ENCODE measurements at regions of chr5 and their contacts with region 1.

Region 1: GRCh38 chr5:55936100-55936693 is 58.6 kb downstream of the IL6ST start:
- DNase-seq: peak; percentile 82
- H3K4me3 ChIP-seq: no peak overlapping the region
- H3K27ac ChIP-seq: no peak overlapping the region
- H3K27me3 ChIP-seq: no peaks in the 10 kb centered on the region
- CTCF ChIP-seq: peak; percentile 96

Region 2: GRCh38 chr5:54905943-54906537 is 1030.2 kb before region 1 on chr5:
- CTCF ChIA-PET with region 1: no interaction called
- POLR2A ChIA-PET with region 1: no interaction called
- DNase-seq: peak; percentile 59
- H3K4me3 ChIP-seq: no peak overlapping the region
- H3K27ac ChIP-seq: no peak overlapping the region
- H3K27me3 ChIP-seq: no peaks in the 10 kb centered on the region
- CTCF ChIP-seq: peak; percentile 79

Region 3: GRCh38 chr5:55714339-55714738 is 221.9 kb before region 1 on chr5:
- CTCF ChIA-PET with region 1: interaction called, 13 read pairs
- POLR2A ChIA-PET with region 1: no interaction called
- DNase-seq: no peak
- H3K4me3 ChIP-seq: no peak overlapping the region
- H3K27ac ChIP-seq: no peak overlapping the region
- H3K27me3 ChIP-seq: peaks cover under 1% of the 10 kb centered on the region
- CTCF ChIP-seq: no peak

Region 4: GRCh38 chr5:56200856-56201666 is 264.9 kb after region 1 on chr5:
- CTCF ChIA-PET with region 1: interaction called, 80 read pairs
- POLR2A ChIA-PET with region 1: interaction called, 3 read pairs
- DNase-seq: peak; percentile 30
- H3K4me3 ChIP-seq: no peak overlapping the region
- H3K27ac ChIP-seq: no peak overlapping the region
- H3K27me3 ChIP-seq: no peaks in the 10 kb centered on the region
- CTCF ChIP-seq: peak; percentile 75

Region 5: GRCh38 chr5:56710826-56711590 is 774.8 kb after region 1 on chr5:
- CTCF ChIA-PET with region 1: interaction called, 10 read pairs
- POLR2A ChIA-PET with region 1: no interaction called
- DNase-seq: no peak
- H3K4me3 ChIP-seq: no peak overlapping the region
- H3K27ac ChIP-seq: no peak overlapping the region
- H3K27me3 ChIP-seq: peaks cover 4% of the 10 kb centered on the region
- CTCF ChIP-seq: no peak

Region 6: GRCh38 chr5:56881571-56881970 is 945.4 kb after region 1 on chr5:
- CTCF ChIA-PET with region 1: interaction called, 12 read pairs
- POLR2A ChIA-PET with region 1: no interaction called
- DNase-seq: no peak
- H3K4me3 ChIP-seq: no peak overlapping the region
- H3K27ac ChIP-seq: no peak overlapping the region
- H3K27me3 ChIP-seq: no peaks in the 10 kb centered on the region
- CTCF ChIP-seq: no peak

Measured in AG04450 (cell line).